ENCODE measurements at regions of chr15 and their contacts with region 1.

Region 1: GRCh38 chr15:92903941-92904831 is 4.1 kb downstream of the CHD2 start:
- DNase-seq: peak; percentile 88
- H3K4me3 ChIP-seq: peak overlapping the region; percentile 66
- CTCF ChIP-seq: no peak

Region 2: GRCh38 chr15:92803847-92804609 is 100.2 kb before region 1 on chr15:
- CTCF ChIA-PET with region 1: interaction called, 11 read pairs
- POLR2A ChIA-PET with region 1: interaction called, 28 read pairs
- DNase-seq: peak; percentile 100
- H3K4me3 ChIP-seq: no peak overlapping the region
- CTCF ChIP-seq: no peak

Region 3: GRCh38 chr15:92808978-92809879 is 95.0 kb before region 1 on chr15:
- CTCF ChIA-PET with region 1: interaction called, 11 read pairs
- POLR2A ChIA-PET with region 1: interaction called, 28 read pairs
- DNase-seq: no peak
- H3K4me3 ChIP-seq: peak overlapping the region; percentile 60
- CTCF ChIP-seq: peak; percentile 73

Region 4: DNA sequence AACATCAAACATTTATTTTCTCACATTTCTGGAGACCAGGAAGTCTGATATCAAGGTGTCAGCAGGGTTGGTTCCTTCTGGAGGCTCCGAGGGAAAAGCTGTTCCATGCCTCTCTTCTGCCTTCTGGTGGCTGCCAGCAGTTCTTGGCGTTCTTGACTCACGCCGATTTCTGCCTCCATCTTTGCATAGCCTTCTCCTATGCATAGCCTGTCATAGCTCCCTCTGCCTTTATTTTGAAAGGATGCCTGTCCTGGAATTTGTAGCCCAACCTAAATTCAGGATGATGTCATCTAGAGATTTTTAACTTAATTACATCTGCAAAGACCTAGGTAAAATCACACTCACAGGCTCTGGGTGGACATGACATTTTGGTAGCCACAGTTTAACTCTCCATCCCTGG is 114.4 kb after region 1 on chr15:
- CTCF ChIA-PET with region 1: no interaction called
- POLR2A ChIA-PET with region 1: no interaction called
- DNase-seq: no peak
- H3K4me3 ChIP-seq: no peak overlapping the region
- CTCF ChIP-seq: no peak

Region 5: DNA sequence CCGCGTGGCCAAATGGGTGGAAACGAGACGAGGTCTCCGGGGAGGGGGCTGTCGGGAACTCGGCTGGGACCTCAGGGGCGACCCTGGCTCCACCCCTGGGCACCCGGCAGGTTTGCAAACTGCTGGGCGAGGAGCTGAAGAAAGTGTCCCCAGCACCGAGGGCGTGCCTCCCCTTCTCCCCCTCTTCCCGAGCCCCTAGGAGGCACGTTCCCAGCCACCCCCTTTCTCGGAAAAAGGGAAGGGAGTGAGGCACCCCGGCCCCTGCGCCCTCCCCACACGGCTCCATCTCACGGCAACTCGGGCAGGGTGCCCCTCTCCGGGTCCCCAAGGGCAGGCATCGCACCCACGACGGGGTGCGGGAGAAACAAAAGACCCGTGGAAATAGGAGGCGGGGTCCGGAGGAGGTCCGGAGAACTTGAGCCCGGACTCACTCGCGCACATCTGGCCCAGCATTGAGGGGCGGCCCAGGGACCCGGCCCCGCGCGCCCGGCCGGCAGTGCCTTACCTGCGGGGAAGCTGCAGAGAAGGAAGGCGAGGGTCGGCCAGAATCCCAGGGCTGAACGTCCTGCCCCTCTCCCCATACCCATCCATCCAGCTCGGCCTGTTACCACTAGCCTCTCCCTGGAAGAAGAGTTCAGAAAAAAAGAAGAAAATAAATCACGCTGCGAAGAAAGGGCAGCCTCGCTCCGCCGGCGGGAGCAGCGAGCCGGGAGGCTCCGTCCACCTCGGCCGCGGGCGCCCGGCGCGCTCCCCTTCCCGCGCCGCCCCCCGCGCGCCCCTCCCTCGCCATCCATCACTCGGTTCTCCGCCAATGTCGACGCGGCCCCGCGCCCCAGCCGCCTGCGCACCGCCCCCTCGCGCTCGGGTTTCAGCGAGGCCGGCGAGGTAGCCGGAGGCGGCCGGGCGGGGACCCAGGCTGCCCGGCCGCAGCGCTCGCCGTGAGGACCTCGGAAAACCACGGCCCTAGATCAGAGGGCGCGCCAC is 168.5 kb after region 1 on chr15:
- CTCF ChIA-PET with region 1: no interaction called
- POLR2A ChIA-PET with region 1: no interaction called
- DNase-seq: no peak
- H3K4me3 ChIP-seq: peak overlapping the region; percentile 72
- CTCF ChIP-seq: no peak